Sciatic nerve (tissue), 2 donors: ENCODE measurements at regions of chr5 and their contacts with region 1.

Region 1: GRCh38 chr5:67350618-67351201 is 154.1 kb upstream of the CD180 start:
- DNase-seq: no peak
- ATAC-seq: peak; percentile 59

Region 2: GRCh38 chr5:67206937-67207336 is 143.8 kb before region 1 on chr5:
- intact Hi-C with region 1: no loop called
- DNase-seq: no peak
- ATAC-seq: no peak

Region 3: GRCh38 chr5:67372887-67373286 is 22.2 kb after region 1 on chr5:
- intact Hi-C with region 1: loop called (anchors 1 kb)
- DNase-seq: no peak
- ATAC-seq: no peak

Region 4: DNA sequence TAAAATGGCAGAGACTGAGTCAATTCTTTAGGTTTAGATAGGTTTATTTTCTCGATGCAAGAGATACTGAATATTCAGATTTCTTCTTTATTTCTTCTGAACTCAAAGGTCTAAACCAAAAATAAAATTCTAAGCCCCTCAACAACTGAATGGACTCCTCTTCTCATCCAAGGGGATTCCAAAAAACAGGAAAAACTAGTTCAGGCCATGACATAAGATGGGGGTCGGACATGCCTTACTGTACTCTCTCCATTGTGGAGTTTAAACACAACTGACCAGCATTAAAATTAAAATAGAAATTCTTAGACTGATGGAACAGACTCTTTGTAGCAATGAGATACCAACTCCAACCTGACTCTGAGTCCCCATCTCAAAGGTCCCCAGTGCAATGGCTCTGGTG is 437.8 kb after region 1 on chr5:
- intact Hi-C with region 1: no loop called
- DNase-seq: no peak
- ATAC-seq: no peak

Region 5: GRCh38 chr5:68478301-68479095 is 1127.8 kb after region 1 on chr5:
- intact Hi-C with region 1: no loop called
- DNase-seq: no peak
- ATAC-seq: peak; percentile 65